ENCODE measurements at regions of chr9 and their contacts with region 1.

Region 1: DNA sequence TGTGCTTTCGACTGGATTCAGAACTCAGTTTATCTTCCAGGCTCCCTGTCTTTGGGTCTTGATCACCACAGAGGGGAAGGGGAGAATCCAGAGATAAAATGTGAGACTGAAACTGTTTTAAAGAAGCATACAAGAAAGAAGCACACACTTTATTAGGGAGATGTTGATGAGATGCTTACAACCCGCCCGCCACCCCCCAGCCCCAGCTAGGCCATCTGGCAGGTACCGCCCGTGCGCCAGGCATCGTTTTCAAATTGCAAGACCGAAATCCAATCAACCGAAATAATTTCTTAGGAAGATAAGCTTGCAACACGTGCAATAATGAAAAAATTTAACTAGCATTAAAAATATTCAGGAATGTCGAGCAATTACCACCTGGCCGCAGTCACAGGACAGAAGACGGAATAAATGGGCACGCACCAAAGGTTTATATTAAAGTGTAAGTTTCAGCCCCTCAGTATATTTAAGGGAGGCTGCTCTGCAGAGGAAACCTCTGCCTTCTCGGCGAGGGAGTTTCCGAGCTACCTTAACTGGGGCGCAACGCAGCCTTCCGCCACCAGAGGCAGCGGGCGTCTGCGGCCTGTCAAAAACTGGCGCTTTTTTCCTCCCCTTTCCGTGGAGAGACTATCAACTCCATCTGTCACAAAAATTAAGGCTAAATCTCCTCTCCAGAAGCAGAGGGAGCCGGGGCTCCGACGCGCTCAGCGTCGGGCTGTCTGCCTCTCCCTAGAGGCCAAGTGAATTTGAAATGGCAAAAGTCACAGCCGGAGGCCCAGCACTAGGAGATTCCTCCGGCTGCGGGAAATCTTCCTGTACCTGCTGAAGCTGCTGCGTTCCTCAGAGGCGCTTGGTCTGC is 996 bp upstream of the GAS1 start:
- DNase-seq: peak; percentile 82
- ATAC-seq: peak; percentile 38
- H3K4me3 ChIP-seq: peak overlapping the region; percentile 42
- H3K27ac ChIP-seq: peak overlapping the region; percentile 63
- H3K4me1 ChIP-seq: no peaks in the 10 kb centered on the region; the same call in 1 of the 2 replicates
- H3K27me3 ChIP-seq: no peaks in the 10 kb centered on the region; the same call in 1 of the 2 replicates
- CTCF ChIP-seq: peak; percentile 84
- POLR2A ChIP-seq: no peak
- RAD21 ChIP-seq: peak; percentile 78

Region 2: GRCh38 chr9:86413966-86414880 is 534.1 kb before region 1 on chr9:
- CTCF ChIA-PET with region 1: no interaction called
- POLR2A ChIA-PET with region 1: no interaction called
- dilution Hi-C with region 1: no loop called
- in situ Hi-C with region 1: no loop called
- intact Hi-C with region 1: loop called (anchors 5 kb)
- DNase-seq: peak; percentile 50
- ATAC-seq: peak; percentile 80
- H3K4me3 ChIP-seq: no peak overlapping the region
- H3K27ac ChIP-seq: no peak overlapping the region
- H3K4me1 ChIP-seq: peaks cover 2% of the 10 kb centered on the region
- H3K27me3 ChIP-seq: no peaks in the 10 kb centered on the region
- CTCF ChIP-seq: peak; percentile 70
- POLR2A ChIP-seq: no peak
- RAD21 ChIP-seq: peak; percentile 70

Region 3: DNA sequence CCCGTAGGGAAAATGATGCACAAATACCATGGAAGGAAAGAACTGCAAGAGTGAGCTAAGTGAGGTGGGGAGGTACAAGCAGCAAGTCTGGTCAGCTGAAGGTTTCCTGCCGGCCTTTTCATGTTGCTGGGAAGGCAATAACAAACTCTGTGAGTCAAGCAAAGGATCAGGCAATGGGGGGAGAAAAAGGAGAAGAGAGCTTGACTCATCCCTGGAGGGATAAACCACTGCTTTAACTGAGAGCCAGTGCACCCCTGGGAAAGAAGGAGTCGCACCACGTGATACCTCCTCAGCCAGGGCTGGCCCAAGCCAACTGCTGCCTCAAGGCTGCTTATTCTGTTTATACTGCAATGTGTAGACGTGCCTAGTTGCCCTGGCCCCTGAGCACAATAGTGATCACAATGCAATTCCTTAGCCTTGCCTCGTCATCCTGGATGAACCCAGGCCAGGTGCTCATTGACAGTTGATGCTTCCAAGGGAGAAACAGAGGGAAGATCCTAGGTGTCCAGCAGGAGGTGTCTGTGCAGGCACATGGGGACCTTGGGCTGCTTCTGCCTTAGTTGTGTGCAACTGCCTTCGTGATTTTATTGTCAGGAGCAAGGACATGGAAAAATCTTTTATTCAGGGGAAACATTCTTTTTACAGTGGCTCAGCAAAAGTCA is 391.1 kb before region 1 on chr9:
- CTCF ChIA-PET with region 1: no interaction called
- POLR2A ChIA-PET with region 1: no interaction called
- dilution Hi-C with region 1: no loop called
- in situ Hi-C with region 1: no loop called
- intact Hi-C with region 1: loop called (anchors 2 kb)
- DNase-seq: peak; percentile 98
- ATAC-seq: peak; percentile 98
- H3K4me3 ChIP-seq: no peak overlapping the region
- H3K27ac ChIP-seq: peak overlapping the region; percentile 61
- H3K4me1 ChIP-seq: peaks cover 6% of the 10 kb centered on the region
- H3K27me3 ChIP-seq: no peaks in the 10 kb centered on the region
- CTCF ChIP-seq: no peak
- POLR2A ChIP-seq: no peak
- RAD21 ChIP-seq: 0 out of 2 replicates have a peak, but pooled peaks have one; percentile 12

Region 4: DNA sequence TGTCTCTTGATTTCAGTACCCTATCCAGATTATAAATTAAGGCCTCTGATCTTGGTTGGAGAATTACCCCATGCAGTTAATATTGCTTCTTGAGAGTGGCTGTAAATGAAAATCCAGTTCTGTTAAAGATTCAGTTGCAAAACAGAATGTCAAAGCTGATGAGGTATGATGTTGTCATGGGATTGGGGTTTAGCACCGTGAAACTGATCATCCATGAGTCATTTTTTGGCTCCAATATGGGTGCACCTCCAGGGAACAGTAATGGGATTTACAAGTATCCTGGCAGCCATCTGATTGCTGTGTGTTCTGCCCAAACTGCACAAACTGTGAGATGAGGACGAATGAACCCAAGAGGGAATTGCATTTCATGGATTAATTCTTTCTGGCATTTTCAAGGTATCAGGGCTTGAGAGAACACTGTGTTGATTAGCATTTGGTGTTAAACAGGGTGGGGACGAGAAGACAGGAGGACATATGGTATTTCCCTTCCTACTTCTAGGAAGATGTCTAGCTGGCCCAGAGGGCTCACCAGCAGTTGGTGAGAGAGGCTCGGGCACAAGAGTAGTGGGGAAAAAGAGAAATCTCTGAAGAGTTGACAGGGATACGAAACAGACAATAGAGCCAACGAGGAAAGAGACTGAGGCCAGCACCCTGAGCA is 215.7 kb before region 1 on chr9:
- CTCF ChIA-PET with region 1: no interaction called
- POLR2A ChIA-PET with region 1: no interaction called
- dilution Hi-C with region 1: no loop called
- in situ Hi-C with region 1: no loop called
- intact Hi-C with region 1: loop called (anchors 5 kb)
- DNase-seq: peak; percentile 92
- ATAC-seq: no peak
- H3K4me3 ChIP-seq: no peak overlapping the region
- H3K27ac ChIP-seq: no peak overlapping the region
- H3K4me1 ChIP-seq: peaks cover 16% of the 10 kb centered on the region
- H3K27me3 ChIP-seq: no peaks in the 10 kb centered on the region
- CTCF ChIP-seq: no peak
- POLR2A ChIP-seq: no peak
- RAD21 ChIP-seq: no peak

Region 5: DNA sequence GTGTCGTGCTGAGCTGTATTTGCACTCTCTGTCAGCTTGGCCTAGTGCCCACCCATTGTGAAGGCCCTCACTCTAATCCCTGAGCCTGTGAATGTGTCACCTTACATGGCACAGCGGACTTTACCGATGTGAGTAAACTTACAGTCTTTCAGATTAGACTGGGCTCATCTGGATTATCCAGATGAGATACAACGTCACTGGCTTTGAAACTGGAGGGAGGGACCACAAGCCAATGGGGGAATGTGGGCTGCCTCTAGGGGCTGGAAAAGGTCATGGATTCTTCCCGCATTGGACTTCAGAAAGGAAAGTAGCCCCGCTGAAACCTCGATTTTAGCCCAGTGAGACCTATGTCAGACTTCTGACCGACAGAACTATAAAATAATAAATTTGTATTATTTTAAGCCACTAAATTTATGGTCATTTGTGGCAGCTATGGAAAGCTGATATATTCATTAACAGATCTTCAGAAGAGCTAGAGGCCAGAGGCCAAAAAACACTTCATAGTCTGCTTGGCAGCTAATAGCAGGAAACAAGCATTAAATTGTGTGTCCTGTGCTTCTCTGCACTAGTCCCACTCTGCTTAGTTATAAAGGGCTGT is 138.0 kb after region 1 on chr9:
- CTCF ChIA-PET with region 1: no interaction called
- POLR2A ChIA-PET with region 1: no interaction called
- dilution Hi-C with region 1: no loop called
- in situ Hi-C with region 1: no loop called
- intact Hi-C with region 1: no loop called
- DNase-seq: no peak
- ATAC-seq: no peak
- H3K4me3 ChIP-seq: no peak overlapping the region
- H3K27ac ChIP-seq: no peak overlapping the region
- H3K4me1 ChIP-seq: no peaks in the 10 kb centered on the region
- H3K27me3 ChIP-seq: no peaks in the 10 kb centered on the region; the same call in 1 of the 2 replicates
- CTCF ChIP-seq: no peak
- POLR2A ChIP-seq: no peak
- RAD21 ChIP-seq: no peak

Region 6: DNA sequence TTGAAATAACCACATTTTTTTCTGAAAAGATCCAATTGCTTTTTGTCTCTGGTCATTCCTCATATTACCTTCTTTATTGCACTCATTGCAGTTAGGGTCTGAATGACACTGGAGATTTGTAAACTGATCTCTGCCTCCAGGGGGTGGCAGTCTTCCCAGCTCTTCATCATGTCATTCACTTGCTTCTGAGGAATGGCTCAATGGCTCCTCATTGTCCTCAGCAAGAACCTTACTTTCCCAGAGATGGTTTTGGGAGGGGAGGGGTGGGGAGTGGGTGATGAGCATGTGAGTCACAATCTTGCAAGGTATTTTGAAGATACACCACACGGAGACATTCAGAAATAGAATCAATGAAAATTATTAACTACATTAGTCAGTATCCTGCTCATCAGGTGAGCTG is 158.8 kb after region 1 on chr9:
- CTCF ChIA-PET with region 1: no interaction called
- POLR2A ChIA-PET with region 1: no interaction called
- dilution Hi-C with region 1: no loop called
- in situ Hi-C with region 1: no loop called
- intact Hi-C with region 1: loop called (anchors 5 kb)
- DNase-seq: peak; percentile 29
- ATAC-seq: no peak
- H3K4me3 ChIP-seq: no peak overlapping the region
- H3K27ac ChIP-seq: no peak overlapping the region
- H3K4me1 ChIP-seq: peaks cover 18% of the 10 kb centered on the region
- H3K27me3 ChIP-seq: no peaks in the 10 kb centered on the region
- CTCF ChIP-seq: no peak
- POLR2A ChIP-seq: no peak
- RAD21 ChIP-seq: no peak

Region 7: DNA sequence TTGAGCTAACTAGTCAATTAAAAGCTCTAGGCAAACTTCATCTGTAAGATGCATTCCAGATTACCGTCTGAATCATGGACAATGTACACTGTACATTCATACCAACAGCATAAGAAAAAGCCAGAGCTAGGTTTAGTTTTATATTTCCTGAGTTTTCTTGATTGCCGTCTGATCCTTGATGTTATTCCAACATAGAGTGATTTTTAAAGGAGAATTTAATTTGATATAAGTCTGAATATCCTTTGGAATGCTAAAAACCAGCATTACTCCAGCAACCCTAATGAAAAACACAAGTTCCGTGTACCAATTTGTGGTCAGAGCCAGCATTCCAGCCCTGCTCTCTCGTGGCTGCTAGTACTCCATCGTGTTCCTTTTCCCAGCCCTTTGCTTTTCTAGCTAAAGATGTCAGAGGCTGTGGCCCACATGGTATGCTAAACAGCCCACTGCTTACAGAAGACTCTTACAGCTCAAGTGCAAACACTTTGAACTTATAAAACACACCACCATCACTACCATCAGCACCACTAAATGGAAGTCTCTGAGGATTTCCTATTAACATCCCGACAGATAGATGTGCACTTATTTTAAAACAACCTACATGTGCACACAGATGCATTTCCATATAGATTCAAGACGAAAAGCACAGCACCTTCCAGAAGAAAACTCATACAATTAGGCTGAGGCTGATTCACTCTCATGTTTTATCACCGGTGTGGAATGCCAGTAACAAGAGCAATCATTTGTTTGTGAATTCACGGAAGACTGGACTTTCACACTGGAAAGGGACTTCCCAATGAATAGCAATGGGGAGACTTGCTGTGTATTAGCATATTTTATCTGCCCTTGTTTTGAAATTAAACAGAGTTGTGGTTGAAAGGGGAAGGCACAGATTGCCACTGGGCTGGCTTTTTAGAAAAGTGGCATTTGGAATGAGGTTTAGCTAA is 245.9 kb after region 1 on chr9:
- CTCF ChIA-PET with region 1: interaction called, 6 read pairs
- POLR2A ChIA-PET with region 1: no interaction called
- dilution Hi-C with region 1: no loop called
- in situ Hi-C with region 1: no loop called
- intact Hi-C with region 1: loop called (anchors 1 kb)
- DNase-seq: peak; percentile 94
- ATAC-seq: peak; percentile 95
- H3K4me3 ChIP-seq: no peak overlapping the region; the same call in 1 of the 2 replicates
- H3K27ac ChIP-seq: peak overlapping the region; percentile 78
- H3K4me1 ChIP-seq: peaks cover 14% of the 10 kb centered on the region
- H3K27me3 ChIP-seq: 0 out of 2 replicates have a peak, but pooled peaks cover 5% of the 10 kb centered on the region
- CTCF ChIP-seq: no peak
- POLR2A ChIP-seq: no peak
- RAD21 ChIP-seq: no peak

Region 8: GRCh38 chr9:87662808-87663528 is 714.7 kb after region 1 on chr9:
- CTCF ChIA-PET with region 1: no interaction called
- POLR2A ChIA-PET with region 1: no interaction called
- dilution Hi-C with region 1: no loop called
- in situ Hi-C with region 1: no loop called
- intact Hi-C with region 1: loop called (anchors 5 kb)
- DNase-seq: peak; percentile 44
- ATAC-seq: peak; percentile 91
- H3K4me3 ChIP-seq: no peak overlapping the region
- H3K27ac ChIP-seq: no peak overlapping the region
- H3K4me1 ChIP-seq: no peaks in the 10 kb centered on the region
- H3K27me3 ChIP-seq: no peaks in the 10 kb centered on the region; the same call in 1 of the 2 replicates
- CTCF ChIP-seq: peak; percentile 77
- POLR2A ChIP-seq: no peak
- RAD21 ChIP-seq: peak; percentile 85

Measured in IMR-90 (cell line).